PC-9 (cell line): ENCODE measurements at regions of chr21 and their contacts with region 1.

Region 1: GRCh38 chr21:36504067-36505058 is 24.4 kb upstream of the CLDN14 start:
- DNase-seq: peak in 1 of 2 experiments; percentile 14
- H3K4me3 ChIP-seq: no peak overlapping the region
- H3K27ac ChIP-seq: no peak overlapping the region
- H3K4me1 ChIP-seq: peaks cover 14% of the 10 kb centered on the region
- H3K27me3 ChIP-seq: no peaks in the 10 kb centered on the region
- CTCF ChIP-seq: peak; percentile 93

Region 2: DNA sequence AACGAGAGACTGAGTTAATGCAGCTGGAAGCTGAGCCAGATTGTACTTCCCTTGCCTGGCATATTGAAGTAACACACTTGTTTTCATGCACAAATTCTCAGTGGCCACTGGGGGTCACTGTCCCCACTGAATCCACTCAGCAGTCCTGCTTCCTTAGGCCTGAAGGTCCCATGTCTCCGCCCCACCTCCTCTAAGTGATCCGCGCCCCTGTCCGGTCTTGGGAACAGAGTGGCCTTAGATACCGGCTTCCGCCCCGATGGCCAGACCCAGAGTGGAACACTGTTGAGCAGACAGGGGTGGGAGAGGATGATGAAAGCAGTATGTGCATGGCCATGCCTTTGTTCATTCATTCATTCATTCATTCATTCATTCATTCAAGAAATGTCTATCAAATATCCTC is 84.4 kb before region 1 on chr21:
- CTCF ChIA-PET with region 1: no interaction called
- POLR2A ChIA-PET with region 1: no interaction called
- intact Hi-C with region 1: loop called (anchors 5 kb)
- DNase-seq: peak; percentile 66 to 70
- H3K4me3 ChIP-seq: no peak overlapping the region
- H3K27ac ChIP-seq: no peak overlapping the region
- H3K4me1 ChIP-seq: no peaks in the 10 kb centered on the region
- H3K27me3 ChIP-seq: no peaks in the 10 kb centered on the region
- CTCF ChIP-seq: peak; percentile 81

Region 3: DNA sequence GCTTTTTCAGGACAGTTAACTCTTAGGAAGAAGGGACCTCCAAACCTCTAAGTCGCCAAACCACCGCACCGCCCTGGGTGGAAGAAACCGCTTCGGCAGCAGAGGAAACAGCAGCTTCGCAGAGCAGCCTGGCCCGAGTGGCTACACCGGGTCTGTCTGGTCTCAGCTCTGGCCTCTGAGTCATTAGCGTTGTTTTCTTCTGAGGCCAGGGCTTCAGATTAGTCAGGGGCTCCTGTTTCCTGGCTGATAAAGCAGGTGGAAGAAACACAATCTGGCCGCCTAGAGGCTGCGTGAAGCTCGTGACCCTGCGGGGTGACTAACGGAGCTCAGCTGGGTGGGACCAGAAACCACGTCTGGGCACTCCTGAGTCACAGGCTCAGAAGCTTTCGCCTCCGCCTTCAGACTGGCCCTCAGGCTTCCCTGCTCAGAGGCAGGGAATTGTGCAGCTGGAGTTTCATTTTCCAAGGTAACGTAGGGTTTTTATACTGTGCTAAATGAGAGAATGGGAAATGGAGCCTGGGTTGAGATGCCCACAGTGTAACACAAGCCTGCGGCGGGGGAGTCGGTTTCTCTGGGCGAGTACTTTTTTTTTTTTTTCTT is 74.3 kb before region 1 on chr21:
- CTCF ChIA-PET with region 1: no interaction called
- POLR2A ChIA-PET with region 1: no interaction called
- intact Hi-C with region 1: loop called (anchors 2 kb)
- DNase-seq: peak; percentile 90 to 97
- H3K4me3 ChIP-seq: peak overlapping the region; percentile 57
- H3K27ac ChIP-seq: peak overlapping the region; percentile 96
- H3K4me1 ChIP-seq: peaks cover 26% of the 10 kb centered on the region
- H3K27me3 ChIP-seq: no peaks in the 10 kb centered on the region
- CTCF ChIP-seq: no peak

Region 4: DNA sequence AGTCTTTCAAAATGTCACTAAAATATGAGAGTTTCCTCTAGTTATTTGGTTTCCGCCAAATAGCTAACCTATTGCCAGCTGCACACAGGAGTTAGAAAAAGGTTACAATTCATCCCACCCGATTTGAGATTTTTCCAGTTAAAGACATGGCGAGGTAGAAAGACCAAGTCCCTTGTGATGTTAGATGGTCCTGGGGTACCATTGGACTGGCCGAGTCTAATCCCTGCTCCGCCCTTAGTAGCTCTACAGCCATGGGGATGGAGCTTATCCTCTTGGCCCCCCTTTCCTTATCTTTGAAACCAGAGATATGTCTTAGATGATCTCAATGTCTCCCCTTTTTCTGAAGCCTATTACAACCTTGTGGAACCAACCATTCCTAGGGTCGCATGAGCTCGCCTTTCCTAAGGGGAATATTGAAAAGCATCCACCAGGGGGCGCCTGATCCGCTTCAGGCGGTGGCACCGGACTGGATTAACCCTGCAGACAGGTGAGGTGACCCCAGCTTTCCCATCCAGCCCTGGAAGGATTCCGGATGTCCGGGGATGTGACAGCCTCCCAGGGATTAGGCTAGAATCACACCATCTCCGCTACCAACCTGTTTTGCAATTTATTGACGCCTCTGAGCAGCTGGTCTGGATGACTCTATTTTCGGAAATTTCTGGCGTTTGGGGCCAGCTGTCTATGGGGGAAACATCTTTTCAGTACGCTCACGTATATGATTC is 126.3 kb after region 1 on chr21:
- CTCF ChIA-PET with region 1: interaction called, 11 read pairs
- POLR2A ChIA-PET with region 1: no interaction called
- intact Hi-C with region 1: loop called (anchors 2 kb)
- DNase-seq: peak; percentile 43 to 61
- H3K4me3 ChIP-seq: no peak overlapping the region
- H3K27ac ChIP-seq: no peak overlapping the region
- H3K4me1 ChIP-seq: peaks cover 30% of the 10 kb centered on the region
- H3K27me3 ChIP-seq: no peaks in the 10 kb centered on the region
- CTCF ChIP-seq: peak; percentile 81

Region 5: DNA sequence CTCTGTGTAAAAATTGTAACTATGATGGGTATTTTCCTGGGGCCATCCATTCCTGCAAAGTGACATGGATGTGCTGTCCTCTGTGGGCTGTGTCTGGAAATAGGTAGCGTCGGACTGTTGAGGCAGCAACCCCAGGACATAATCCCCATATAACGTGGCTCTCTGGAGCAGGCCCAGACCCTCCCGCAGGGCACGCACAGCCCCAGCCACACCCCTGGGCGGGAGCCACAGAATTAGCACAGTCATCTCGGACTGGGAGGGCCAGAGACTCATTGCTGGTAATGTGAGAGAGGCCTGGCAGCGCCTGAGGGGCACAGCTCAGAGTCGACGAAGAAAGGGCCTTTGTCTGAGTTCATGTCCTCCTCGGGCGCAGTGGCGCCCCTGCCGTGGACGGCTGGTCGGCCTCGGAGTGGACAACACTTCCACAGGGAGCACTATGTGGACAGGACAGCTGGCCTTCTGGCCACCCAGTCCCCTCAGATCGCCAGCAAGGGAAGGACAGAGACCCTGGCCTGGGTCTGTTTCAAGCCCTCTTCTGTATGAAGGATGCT is 214.7 kb after region 1 on chr21:
- CTCF ChIA-PET with region 1: no interaction called
- POLR2A ChIA-PET with region 1: no interaction called
- intact Hi-C with region 1: loop called (anchors 10 kb)
- DNase-seq: peak in 1 of 2 experiments; percentile 64
- H3K4me3 ChIP-seq: no peak overlapping the region
- H3K27ac ChIP-seq: no peak overlapping the region
- H3K4me1 ChIP-seq: no peaks in the 10 kb centered on the region
- H3K27me3 ChIP-seq: no peaks in the 10 kb centered on the region
- CTCF ChIP-seq: no peak

Region 6: DNA sequence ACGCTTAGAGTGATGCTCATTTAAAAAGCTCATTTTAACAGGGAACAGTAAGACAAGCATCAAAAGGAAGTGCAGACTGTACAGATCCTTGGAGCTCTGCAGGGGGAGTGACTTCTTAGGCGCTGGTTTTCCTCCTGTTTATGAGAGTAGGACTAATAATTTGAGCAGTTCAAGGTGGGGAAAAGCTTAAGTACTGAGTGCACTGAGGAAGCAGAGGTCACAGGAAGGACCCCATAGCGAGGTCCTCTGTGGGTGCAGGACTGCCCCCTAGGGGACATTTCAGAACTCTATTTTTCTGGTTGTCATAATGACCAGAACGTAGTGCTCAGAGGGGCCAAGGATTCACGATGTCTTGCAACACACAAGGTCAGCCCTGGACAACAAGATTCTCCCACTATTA is 350.0 kb after region 1 on chr21:
- CTCF ChIA-PET with region 1: no interaction called
- POLR2A ChIA-PET with region 1: no interaction called
- intact Hi-C with region 1: loop called (anchors 10 kb)
- DNase-seq: no peak
- H3K4me3 ChIP-seq: no peak overlapping the region
- H3K27ac ChIP-seq: no peak overlapping the region
- H3K4me1 ChIP-seq: peaks cover 14% of the 10 kb centered on the region
- H3K27me3 ChIP-seq: no peaks in the 10 kb centered on the region
- CTCF ChIP-seq: peak; percentile 59

Region 7: DNA sequence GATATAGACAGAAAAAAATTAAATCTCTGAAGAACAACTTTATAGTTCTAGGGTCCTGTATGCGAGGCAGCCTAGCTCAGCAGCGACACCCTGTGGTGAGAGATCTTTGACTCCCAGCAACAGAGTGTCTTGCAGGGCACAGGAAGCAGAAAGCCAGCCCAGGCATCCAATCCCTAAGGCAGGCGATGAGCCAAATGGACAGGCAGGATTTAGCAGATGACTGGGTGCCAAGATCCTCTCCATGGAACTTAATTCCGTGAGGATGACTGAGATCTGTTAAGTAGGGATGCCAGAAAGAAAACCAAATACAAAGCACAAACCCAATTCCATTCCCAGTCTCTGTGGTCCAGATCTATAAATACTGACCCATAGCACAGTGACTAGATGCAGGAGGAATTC is 423.4 kb after region 1 on chr21:
- CTCF ChIA-PET with region 1: no interaction called
- POLR2A ChIA-PET with region 1: no interaction called
- intact Hi-C with region 1: loop called (anchors 1 kb)
- DNase-seq: peak; percentile 43 to 66
- H3K4me3 ChIP-seq: no peak overlapping the region
- H3K27ac ChIP-seq: no peak overlapping the region
- H3K4me1 ChIP-seq: no peaks in the 10 kb centered on the region
- H3K27me3 ChIP-seq: no peaks in the 10 kb centered on the region
- CTCF ChIP-seq: peak; percentile 87